Heart left ventricle (tissue), 16 donors: ENCODE measurements at regions of chr1 and their contacts with region 1.

Region 1: GRCh38 chr1:212368073-212368484 is 46.6 kb downstream of the PACC1 start:
- DNase-seq: peak in 3 of 5 donors; percentile 33 to 51 (median 35)
- ATAC-seq: peak; percentile 45 to 88 (median 84)
- H3K4me3 ChIP-seq: no peak overlapping the region
- H3K27ac ChIP-seq: peak overlapping the region in 1 of 12 donors; percentile 2
- H3K4me1 ChIP-seq: peaks cover 0 to 23% (median 1%) of the 10 kb centered on the region in 12 donors
- H3K27me3 ChIP-seq: no peaks in the 10 kb centered on the region
- CTCF ChIP-seq: peak; percentile 76 to 91 (median 83)
- POLR2A ChIP-seq: no peak

Region 2: DNA sequence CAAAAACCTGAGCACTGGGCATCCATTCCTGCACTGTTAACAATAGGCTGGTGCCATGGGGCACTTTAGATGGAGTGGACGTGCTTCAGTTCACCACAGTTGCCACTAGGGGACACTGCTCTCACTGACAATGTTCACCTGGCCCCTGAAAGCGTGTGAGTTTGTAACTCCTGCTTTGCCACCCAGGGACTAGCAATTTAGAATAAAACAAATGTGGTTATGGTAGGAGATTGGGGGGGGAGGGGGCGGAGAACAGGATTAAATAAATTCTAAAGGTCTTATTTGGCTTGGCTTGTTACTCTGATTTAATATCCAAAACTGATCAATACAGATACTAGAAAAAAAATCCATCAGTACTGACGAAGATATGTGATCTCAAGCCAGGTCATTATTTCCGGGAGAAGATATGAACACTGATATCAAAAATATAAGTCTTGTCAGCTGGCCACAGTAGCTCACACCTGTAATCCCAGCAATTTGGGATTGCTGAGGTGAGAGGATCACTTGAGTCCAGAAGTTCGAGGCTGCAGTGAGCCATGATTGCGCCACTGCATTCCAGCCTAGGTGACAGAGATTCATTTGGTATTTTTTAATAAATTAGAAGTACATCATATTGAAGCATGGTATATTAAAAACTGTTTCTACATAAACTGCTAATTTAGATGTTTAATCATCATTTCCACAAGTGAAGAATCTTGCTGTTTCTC is 355.9 kb before region 1 on chr1:
- intact Hi-C with region 1: loop called in 1 of 10 experiments (anchors 5 kb)
- DNase-seq: peak in 4 of 5 donors; percentile 39 to 66 (median 59)
- ATAC-seq: peak; percentile 69 to 93 (median 86)
- H3K4me3 ChIP-seq: no peak overlapping the region
- H3K27ac ChIP-seq: no peak overlapping the region
- H3K4me1 ChIP-seq: no peaks in the 10 kb centered on the region
- H3K27me3 ChIP-seq: no peaks in the 10 kb centered on the region
- CTCF ChIP-seq: peak; percentile 84 to 95 (median 90)
- POLR2A ChIP-seq: no peak

Region 3: DNA sequence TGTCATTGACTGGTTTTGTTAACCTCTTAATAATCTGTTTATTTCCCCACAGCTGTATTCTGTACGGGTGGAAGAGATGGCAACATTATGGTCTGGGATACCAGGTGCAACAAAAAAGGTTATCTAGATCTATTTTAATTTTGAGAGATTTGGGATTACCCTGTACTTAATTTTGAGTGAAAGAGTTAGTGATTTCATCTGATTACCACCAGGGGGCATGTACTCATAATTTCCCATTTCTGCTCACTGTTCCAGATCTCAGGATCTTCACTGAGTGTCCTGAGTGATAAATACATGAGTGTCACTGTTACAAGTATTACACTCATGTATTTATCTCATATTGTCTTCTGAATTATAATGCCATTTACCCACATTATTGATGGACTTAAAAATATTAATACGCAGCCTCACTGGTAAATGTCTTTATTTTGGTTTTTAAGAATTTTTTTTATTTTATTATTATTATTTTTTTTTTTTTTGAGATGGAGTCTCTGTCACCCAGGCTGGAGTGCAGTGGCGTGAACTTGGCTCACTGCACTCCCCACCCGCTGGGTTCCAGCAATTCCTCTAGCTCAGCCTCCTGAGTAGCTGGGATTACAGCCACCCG is 305.1 kb before region 1 on chr1:
- intact Hi-C with region 1: loop called in 7 of 10 experiments (anchors 2 to 5 kb)
- DNase-seq: no peak
- ATAC-seq: peak in 3 of 4 donors; percentile 39 to 51 (median 47)
- H3K4me3 ChIP-seq: no peak overlapping the region
- H3K27ac ChIP-seq: no peak overlapping the region
- H3K4me1 ChIP-seq: peaks cover 0 to 7% (median 0%) of the 10 kb centered on the region in 12 donors
- H3K27me3 ChIP-seq: no peaks in the 10 kb centered on the region
- CTCF ChIP-seq: peak; percentile 56 to 77 (median 69)
- POLR2A ChIP-seq: no peak

Region 4: GRCh38 chr1:212070720-212071302 is 297.3 kb before region 1 on chr1:
- intact Hi-C with region 1: loop called (anchors 1 to 5 kb)
- DNase-seq: no peak
- ATAC-seq: peak in 3 of 4 donors; percentile 48 to 61 (median 57)
- H3K4me3 ChIP-seq: no peak overlapping the region
- H3K27ac ChIP-seq: peak overlapping the region in 2 of 12 donors; percentile 2 to 33
- H3K4me1 ChIP-seq: peaks cover 0 to 12% (median 0%) of the 10 kb centered on the region in 12 donors
- H3K27me3 ChIP-seq: no peaks in the 10 kb centered on the region
- CTCF ChIP-seq: peak; percentile 69 to 89 (median 80)
- POLR2A ChIP-seq: no peak

Region 5: GRCh38 chr1:212488397-212489283 is 120.6 kb after region 1 on chr1:
- intact Hi-C with region 1: no loop called
- DNase-seq: peak in 2 of 5 donors; percentile 29 to 41
- ATAC-seq: peak; percentile 41 to 76 (median 68)
- H3K4me3 ChIP-seq: no peak overlapping the region
- H3K27ac ChIP-seq: peak overlapping the region in 3 of 12 donors; percentile 42 to 76 (median 51)
- H3K4me1 ChIP-seq: peaks cover 0 to 48% (median 8%) of the 10 kb centered on the region in 12 donors
- H3K27me3 ChIP-seq: no peaks in the 10 kb centered on the region
- CTCF ChIP-seq: no peak
- POLR2A ChIP-seq: no peak